ENCODE measurements at regions of chr12 and their contacts with region 1.

Region 1: DNA sequence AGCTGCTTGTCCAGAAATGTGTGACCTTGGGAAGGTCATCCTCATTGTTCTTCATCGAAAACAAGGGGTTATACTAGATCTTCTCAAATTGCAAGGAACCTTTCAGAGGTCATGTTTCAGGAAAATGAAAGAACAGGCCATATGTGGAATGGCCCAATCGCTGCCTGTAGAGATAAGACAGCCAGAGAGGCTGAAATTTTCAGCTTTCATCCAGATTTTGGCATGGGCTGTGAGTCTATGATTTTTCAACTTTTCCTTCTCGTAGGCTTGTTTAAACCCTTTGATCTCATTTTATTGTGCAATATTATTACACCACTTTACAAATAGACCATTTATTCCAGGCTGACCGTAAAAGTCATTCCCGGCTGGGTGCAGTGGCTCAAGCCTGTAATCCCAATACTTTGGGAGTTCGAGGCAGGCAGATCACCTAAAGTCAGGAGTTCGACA is 17.1 kb upstream of the ATXN2 start:
- DNase-seq: no peak
- ATAC-seq: no peak
- H3K4me3 ChIP-seq: no peak overlapping the region
- H3K27ac ChIP-seq: no peak overlapping the region
- H3K4me1 ChIP-seq: no peaks in the 10 kb centered on the region
- H3K27me3 ChIP-seq: no peaks in the 10 kb centered on the region
- CTCF ChIP-seq: no peak

Region 2: DNA sequence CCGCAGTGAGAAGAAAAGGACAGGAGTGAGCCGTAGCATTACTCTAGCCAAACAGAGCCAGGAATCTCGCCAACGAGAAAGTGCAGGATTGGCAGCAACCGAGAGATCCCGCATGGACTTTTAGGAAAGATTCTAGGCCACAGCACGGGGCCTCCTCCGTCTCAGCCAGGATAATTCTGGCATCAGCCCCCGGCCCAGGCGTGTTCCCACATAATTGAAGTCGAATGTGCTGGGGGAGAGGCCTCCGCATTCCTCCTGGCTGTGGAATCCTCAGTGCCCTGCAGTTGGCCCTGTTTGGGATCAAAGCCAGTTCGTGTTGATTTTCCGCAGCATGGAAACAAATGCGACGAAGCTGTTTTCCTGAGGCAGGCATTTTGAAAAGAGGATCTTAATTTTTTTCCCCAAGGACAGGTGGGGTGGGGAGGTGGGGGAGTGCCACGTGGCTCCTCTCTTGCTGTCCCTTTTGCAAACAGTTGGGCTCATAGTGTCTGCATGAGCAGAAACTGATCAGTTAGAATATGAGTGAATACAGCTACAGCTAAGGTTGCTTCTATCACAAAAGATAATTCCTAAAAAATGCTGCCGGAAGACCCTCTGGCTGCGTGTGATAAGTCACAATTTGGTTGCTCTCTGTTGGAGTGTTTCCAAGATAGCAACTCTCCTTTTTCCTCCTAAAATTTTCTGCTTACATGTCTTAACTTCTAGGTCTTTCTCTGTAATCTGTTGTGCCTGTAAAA is 20.2 kb after region 1 on chr12:
- CTCF ChIA-PET with region 1: interaction called, 10 read pairs
- POLR2A ChIA-PET with region 1: no interaction called
- intact Hi-C with region 1: no loop called
- DNase-seq: no peak
- ATAC-seq: no peak
- H3K4me3 ChIP-seq: no peak overlapping the region
- H3K27ac ChIP-seq: no peak overlapping the region
- H3K4me1 ChIP-seq: no peaks in the 10 kb centered on the region
- H3K27me3 ChIP-seq: no peaks in the 10 kb centered on the region
- CTCF ChIP-seq: no peak

Region 3: GRCh38 chr12:111664961-111665865 is 49.0 kb after region 1 on chr12:
- CTCF ChIA-PET with region 1: no interaction called
- POLR2A ChIA-PET with region 1: no interaction called
- intact Hi-C with region 1: no loop called
- DNase-seq: no peak
- ATAC-seq: no peak
- H3K4me3 ChIP-seq: no peak overlapping the region
- H3K27ac ChIP-seq: no peak overlapping the region
- H3K4me1 ChIP-seq: no peaks in the 10 kb centered on the region
- H3K27me3 ChIP-seq: no peaks in the 10 kb centered on the region
- CTCF ChIP-seq: no peak

Region 4: DNA sequence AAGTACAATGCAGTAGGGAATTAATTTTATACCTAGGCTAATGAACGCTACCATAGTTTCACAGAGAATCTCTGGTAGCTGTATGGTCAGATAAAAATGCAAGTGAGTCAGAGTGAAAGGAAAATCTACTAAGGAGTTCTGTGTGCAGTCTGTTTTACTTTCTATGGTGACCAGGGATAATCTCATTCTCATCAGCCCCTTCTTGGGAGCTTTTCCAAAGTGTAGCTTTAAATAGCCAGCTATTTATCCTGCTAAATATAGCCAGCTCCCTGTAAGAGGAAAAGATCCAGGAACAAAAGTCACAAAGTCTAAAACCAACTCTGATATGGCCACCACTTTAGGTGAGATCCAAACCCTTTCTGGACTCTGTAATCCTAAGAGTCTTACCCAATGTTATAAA is 321.2 kb after region 1 on chr12:
- CTCF ChIA-PET with region 1: no interaction called
- POLR2A ChIA-PET with region 1: no interaction called
- intact Hi-C with region 1: no loop called
- DNase-seq: no peak
- ATAC-seq: no peak
- H3K4me3 ChIP-seq: no peak overlapping the region
- H3K27ac ChIP-seq: no peak overlapping the region
- H3K4me1 ChIP-seq: peaks cover 2% of the 10 kb centered on the region; the same call in 1 of the 2 replicates
- H3K27me3 ChIP-seq: no peaks in the 10 kb centered on the region
- CTCF ChIP-seq: no peak

Region 5: GRCh38 chr12:112096667-112097066 is 480.5 kb after region 1 on chr12:
- CTCF ChIA-PET with region 1: no interaction called
- POLR2A ChIA-PET with region 1: interaction called, 16 read pairs
- intact Hi-C with region 1: no loop called
- DNase-seq: peak; percentile 100
- ATAC-seq: peak; percentile 87
- H3K4me3 ChIP-seq: no peak overlapping the region; the same call in 1 of the 2 replicates
- H3K27ac ChIP-seq: peak overlapping the region; percentile 76
- H3K4me1 ChIP-seq: peaks cover 31% of the 10 kb centered on the region
- H3K27me3 ChIP-seq: no peaks in the 10 kb centered on the region
- CTCF ChIP-seq: no peak

Measured in PC-3 (cell line).